CD4-positive, alpha-beta memory T cell (primary cell): ENCODE measurements at regions of chr3 and their contacts with region 1.

Region 1: GRCh38 chr3:49939858-49940666 is at the start of gene RBM6:
- DNase-seq: peak; percentile 92 to 97 (median 94)
- H3K4me3 ChIP-seq: peak within 1 kb of the TSS; percentile 75 to 96
- H3K4me3 Mint-ChIP-seq: peak within 1 kb of the TSS; percentile 94 to 99 (median 98)
- H3K27ac ChIP-seq: peak within 1 kb of the TSS; percentile 96
- H3K27ac Mint-ChIP-seq: peak within 1 kb of the TSS; percentile 97 to 99 (median 98)
- H3K4me1 ChIP-seq: peaks cover 19% of the 10 kb centered on the region
- H3K4me1 Mint-ChIP-seq: peaks cover 17 to 40% (median 26%) of the 10 kb centered on the region in 4 donors
- H3K27me3 ChIP-seq: no peaks in the 10 kb centered on the region
- H3K27me3 Mint-ChIP-seq: no peaks in the 10 kb centered on the region
- total RNA-seq, gene RBM6: 191 to 194 TPM

Region 2: DNA sequence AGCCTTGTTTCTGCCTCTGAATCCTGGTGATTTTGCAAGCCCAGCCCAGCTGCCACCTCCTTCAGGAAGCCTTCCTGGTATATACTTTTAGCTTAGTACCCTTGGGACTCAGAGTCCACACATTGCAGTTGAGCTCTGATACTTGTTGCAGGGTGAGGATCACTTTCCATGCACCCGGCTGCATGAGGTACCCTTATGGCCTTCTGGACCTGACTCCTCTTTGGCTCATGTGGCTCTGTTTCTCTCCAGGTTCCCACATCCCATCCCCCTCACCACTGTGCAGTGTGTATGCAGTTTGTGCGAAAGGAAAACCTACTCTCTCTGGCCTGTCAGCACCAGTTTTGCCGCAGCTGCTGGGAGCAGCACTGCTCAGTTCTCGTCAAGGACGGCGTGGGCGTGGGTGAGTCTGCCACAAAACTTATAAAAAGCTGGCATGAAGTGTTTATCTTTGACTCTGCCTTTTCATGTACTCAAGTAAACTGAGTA is 973.1 kb before region 1 on chr3:
- CTCF ChIA-PET with region 1: no interaction called
- POLR2A ChIA-PET with region 1: no interaction called
- intact Hi-C with region 1: no loop called
- DNase-seq: no peak
- H3K4me3 ChIP-seq: no peak overlapping the region
- H3K4me3 Mint-ChIP-seq: peak overlapping the region in 7 of 8 donors; percentile 13 to 73 (median 58)
- H3K27ac ChIP-seq: no peak overlapping the region
- H3K27ac Mint-ChIP-seq: peak overlapping the region in 6 of 7 donors; percentile 13 to 87 (median 78)
- H3K4me1 ChIP-seq: peaks cover 18% of the 10 kb centered on the region
- H3K4me1 Mint-ChIP-seq: peaks cover 14 to 17% (median 14%) of the 10 kb centered on the region in 4 donors
- H3K27me3 ChIP-seq: no peaks in the 10 kb centered on the region
- H3K27me3 Mint-ChIP-seq: no peaks in the 10 kb centered on the region

Region 3: DNA sequence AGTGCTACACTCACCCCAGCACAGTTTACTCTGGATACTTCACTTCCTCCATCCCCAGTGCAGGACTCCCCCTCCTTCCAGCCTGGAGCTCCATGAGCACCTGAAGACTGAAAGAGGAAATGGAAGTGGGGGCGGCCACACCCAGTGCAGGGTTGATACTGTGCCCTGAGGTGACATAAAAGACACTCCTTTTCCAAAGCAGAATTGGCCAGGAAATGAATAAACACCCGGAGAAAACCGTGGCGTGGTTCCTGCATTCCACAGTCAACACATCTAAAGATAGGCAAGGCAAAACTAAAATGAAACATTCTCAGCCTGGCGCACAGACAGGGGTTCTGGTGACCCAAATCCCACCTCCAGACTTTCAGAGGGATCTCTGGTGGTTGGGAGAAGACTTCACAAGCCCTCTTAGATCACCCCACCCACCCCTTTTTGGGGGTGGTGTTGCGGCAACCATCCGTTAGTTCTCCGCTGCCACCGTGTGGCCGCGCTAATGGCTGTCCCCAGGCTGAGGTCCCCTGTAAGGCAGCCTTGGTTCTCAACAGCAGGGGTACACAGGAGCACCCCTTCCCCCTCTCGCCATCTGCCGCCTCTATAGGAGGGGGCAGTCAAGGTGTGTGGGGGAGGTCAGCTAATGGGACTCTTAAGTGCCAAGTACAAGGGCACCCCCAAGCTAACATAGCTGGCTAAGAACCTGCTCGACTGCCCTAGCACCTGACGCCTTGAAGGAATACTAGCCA is 33.9 kb before region 1 on chr3:
- CTCF ChIA-PET with region 1: no interaction called
- POLR2A ChIA-PET with region 1: interaction called, 5 read pairs
- intact Hi-C with region 1: loop called (anchors 1 kb)
- DNase-seq: peak; percentile 39 to 64 (median 41)
- H3K4me3 ChIP-seq: peak overlapping the region in 1 of 2 donors; percentile 4
- H3K4me3 Mint-ChIP-seq: peak overlapping the region; percentile 48 to 82 (median 62)
- H3K27ac ChIP-seq: peak overlapping the region; percentile 40
- H3K27ac Mint-ChIP-seq: peak overlapping the region; percentile 77 to 92 (median 87)
- H3K4me1 ChIP-seq: peaks cover 35% of the 10 kb centered on the region
- H3K4me1 Mint-ChIP-seq: peaks cover 15 to 36% (median 25%) of the 10 kb centered on the region in 4 donors
- H3K27me3 ChIP-seq: no peaks in the 10 kb centered on the region
- H3K27me3 Mint-ChIP-seq: no peaks in the 10 kb centered on the region

Region 4: GRCh38 chr3:49929331-49930240 is 10.5 kb before region 1 on chr3 and contains the start of gene MON1A:
- CTCF ChIA-PET with region 1: interaction called, 4 read pairs
- POLR2A ChIA-PET with region 1: interaction called, 60 read pairs
- intact Hi-C with region 1: loop called (anchors 1 kb)
- DNase-seq: peak; percentile 76 to 87 (median 79)
- H3K4me3 ChIP-seq: peak within 1 kb of the TSS; percentile 95 to 98
- H3K4me3 Mint-ChIP-seq: peak within 1 kb of the TSS; percentile 81 to 88 (median 85)
- H3K27ac ChIP-seq: peak within 1 kb of the TSS; percentile 92
- H3K27ac Mint-ChIP-seq: peak within 1 kb of the TSS; percentile 76 to 94 (median 90)
- H3K4me1 ChIP-seq: peaks cover 23% of the 10 kb centered on the region
- H3K4me1 Mint-ChIP-seq: peaks cover 15 to 32% (median 26%) of the 10 kb centered on the region in 4 donors
- H3K27me3 ChIP-seq: no peaks in the 10 kb centered on the region
- H3K27me3 Mint-ChIP-seq: no peaks in the 10 kb centered on the region
- total RNA-seq, gene MON1A: 9.5 to 11.1 TPM

Region 5: GRCh38 chr3:49955636-49956035 is 15.6 kb after region 1 on chr3:
- CTCF ChIA-PET with region 1: no interaction called
- POLR2A ChIA-PET with region 1: interaction called, 10 read pairs
- intact Hi-C with region 1: no loop called
- DNase-seq: no peak
- H3K4me3 ChIP-seq: no peak overlapping the region
- H3K4me3 Mint-ChIP-seq: no peak overlapping the region
- H3K27ac ChIP-seq: no peak overlapping the region
- H3K27ac Mint-ChIP-seq: peak overlapping the region in 3 of 7 donors; percentile 16 to 47 (median 42)
- H3K4me1 ChIP-seq: peaks cover 7% of the 10 kb centered on the region
- H3K4me1 Mint-ChIP-seq: peaks cover 14 to 44% (median 28%) of the 10 kb centered on the region in 4 donors
- H3K27me3 ChIP-seq: no peaks in the 10 kb centered on the region
- H3K27me3 Mint-ChIP-seq: no peaks in the 10 kb centered on the region

Region 6: DNA sequence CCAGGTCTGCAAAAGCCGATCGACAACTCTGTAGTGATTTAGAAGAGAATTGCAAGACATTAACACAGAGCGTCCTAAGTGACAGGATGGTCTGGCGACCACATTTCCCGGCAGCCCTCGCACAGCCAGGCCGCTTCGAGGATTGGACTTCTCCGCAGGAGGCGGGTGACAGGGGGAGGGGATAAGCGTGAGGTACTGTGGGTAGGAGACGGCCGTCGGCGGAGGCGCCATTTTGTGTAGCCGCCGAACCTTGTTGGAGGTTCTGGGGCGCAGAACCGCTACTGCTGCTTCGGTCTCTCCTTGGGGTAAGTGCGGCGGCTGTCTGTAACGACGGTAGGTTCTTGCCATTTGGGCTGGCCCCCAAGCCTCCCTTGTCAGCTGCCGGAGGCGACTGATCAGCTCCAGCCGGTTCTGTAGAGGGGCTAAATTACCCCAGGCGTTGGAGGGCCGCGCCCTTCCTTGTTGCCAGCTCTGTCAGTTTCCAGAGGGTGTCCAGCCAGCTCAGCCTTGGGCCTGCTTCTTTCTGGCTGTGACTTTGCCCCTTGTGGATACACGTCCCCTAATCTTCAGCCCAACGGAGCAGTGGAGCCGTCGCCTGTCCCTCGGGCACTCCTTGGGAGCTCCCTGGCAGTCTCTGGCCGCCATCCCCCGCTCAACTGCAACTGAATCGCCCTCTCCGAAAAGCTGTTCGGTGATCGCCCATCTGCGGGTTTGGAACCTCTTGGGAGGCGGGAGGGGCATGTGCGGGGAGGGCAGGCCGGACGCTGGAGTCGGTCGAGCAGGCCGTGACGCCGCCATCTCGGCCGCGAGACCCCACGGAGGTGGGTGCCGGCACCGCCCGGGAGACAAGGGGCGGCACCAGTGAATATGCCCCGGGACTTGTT is 148.9 kb after region 1 on chr3 and contains the start of gene RBM5:
- CTCF ChIA-PET with region 1: no interaction called
- POLR2A ChIA-PET with region 1: no interaction called
- intact Hi-C with region 1: loop called (anchors 1 kb)
- DNase-seq: peak; percentile 88 to 95 (median 89)
- H3K4me3 ChIP-seq: peak within 1 kb of the TSS; percentile 93 to 100
- H3K4me3 Mint-ChIP-seq: peak within 1 kb of the TSS; percentile 96 to 99 (median 98)
- H3K27ac ChIP-seq: peak within 1 kb of the TSS; percentile 97
- H3K27ac Mint-ChIP-seq: peak within 1 kb of the TSS; percentile 91 to 99 (median 98)
- H3K4me1 ChIP-seq: peaks cover 23% of the 10 kb centered on the region
- H3K4me1 Mint-ChIP-seq: peaks cover 20 to 42% (median 30%) of the 10 kb centered on the region in 4 donors
- H3K27me3 ChIP-seq: no peaks in the 10 kb centered on the region
- H3K27me3 Mint-ChIP-seq: no peaks in the 10 kb centered on the region
- total RNA-seq, gene RBM5: 377 to 385 TPM